Left cardiac atrium (tissue), 4 donors: ENCODE measurements at regions of chr16 and their contacts with region 1.

Region 1: DNA sequence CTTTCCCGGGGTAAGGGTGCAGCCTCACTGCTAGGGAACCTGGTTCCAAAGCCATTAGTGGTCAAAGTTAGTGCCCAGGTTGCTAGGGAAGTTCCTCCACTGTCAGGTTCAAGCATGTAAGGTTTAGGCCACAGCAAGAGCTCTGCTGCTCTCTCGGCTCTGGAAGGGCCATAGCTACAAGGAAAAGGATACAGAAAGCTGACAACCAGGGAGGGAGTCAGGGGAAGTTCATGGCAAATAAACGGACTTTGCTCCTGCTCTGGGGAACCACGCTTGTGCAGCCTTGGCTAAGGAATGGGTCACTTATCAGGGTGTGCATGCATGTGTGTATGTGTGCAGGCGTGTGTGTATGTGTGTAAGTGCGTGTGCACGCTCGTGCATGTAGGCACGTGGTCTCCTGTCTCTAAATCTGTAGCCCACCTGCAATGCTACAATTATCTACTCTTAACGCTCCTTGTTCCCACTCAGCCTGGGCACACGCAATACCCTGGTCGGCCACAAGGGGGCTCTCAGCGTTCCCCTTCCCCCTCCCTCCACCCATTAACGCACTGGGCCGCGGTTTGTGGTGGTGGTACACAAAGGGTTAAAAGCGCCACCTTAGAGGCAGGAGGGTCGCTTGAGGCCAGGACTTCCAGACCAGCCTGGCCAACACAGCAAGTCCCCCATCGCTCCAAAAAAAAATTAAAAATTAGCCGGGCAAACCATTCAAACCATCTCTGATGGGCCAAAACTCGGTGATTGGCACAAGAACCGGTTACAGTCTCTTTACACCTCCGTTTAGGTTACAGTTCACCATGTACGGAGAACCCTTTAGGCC is 48.4 kb upstream of the KDM8 start:
- DNase-seq: peak; percentile 55
- ATAC-seq: peak; percentile 59 to 83

Region 2: GRCh38 chr16:27027971-27028370 is 126.9 kb before region 1 on chr16:
- intact Hi-C with region 1: no loop called
- DNase-seq: no peak
- ATAC-seq: no peak

Region 3: DNA sequence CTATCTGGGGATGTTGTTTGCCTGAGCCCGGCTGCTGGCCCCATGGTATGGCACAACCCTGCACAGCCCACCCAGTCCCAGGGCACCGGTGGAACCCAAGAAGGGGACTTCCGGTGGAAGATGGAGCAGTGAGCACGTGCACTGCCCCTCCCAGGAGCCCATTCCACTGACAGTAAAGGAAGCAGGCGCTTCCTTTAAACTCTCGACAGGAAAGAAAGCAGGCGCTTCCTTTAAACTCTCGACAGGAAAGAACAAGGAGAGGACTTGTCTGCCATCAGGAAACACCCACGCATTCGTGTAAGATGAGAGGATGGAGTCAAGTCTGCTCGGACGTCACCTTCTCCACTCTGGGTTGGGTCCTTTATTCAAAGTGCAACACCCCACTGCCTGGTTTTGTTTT is 300.8 kb after region 1 on chr16:
- intact Hi-C with region 1: loop called in 1 of 2 experiments (anchors 5 kb)
- DNase-seq: no peak
- ATAC-seq: no peak

Region 4: DNA sequence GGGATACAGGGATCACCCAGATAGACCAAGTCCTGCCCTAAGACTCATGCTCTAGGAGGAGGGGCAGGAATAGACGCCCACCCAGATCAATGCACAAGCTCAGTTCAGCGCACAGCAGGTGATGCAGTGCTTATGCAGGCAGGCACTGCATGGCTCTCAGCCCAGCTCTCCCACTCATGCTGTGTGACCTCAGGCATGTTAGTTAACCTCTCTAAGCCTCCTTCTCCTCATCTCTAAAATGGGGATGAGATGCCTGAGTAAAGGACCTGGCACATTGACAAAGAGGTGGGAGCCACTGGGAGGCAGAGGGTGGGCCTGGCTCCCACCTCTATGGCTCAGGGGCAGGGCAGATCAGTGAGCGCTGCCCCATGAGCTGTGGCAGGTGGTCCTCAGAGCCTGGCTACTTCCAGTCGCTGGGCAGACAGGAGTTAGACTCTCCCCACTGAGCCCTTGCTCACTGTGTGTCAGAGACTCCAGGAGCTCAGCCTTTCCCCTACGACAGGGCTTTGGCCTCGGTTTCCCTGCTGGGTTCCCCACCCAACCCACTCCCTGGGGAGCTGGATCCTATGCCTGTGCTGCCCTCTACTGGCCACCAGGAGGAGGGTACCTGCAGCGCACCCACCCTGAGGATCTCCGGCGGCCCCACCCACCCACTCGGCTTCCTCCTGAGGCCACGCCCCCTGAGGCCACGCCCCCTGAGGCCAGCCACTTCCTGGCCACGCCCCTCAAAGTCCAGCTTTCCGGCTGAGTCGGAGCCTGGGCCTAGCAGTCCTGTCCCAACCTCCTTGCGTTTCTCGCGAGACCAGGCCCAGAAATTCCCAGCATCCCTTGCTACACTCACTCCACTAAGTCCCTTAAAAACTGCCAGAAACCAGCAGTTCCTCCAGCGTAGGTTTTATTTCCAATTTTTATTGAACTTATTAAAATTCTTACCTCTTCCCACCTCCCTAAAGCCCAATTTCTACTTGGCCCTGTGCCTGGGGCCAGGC is 712.5 kb after region 1 on chr16:
- intact Hi-C with region 1: no loop called
- DNase-seq: peak; percentile 60
- ATAC-seq: peak; percentile 84 to 90